OCI-LY7 (cell line): ENCODE measurements at regions of chr5 and their contacts with region 1.

Region 1: DNA sequence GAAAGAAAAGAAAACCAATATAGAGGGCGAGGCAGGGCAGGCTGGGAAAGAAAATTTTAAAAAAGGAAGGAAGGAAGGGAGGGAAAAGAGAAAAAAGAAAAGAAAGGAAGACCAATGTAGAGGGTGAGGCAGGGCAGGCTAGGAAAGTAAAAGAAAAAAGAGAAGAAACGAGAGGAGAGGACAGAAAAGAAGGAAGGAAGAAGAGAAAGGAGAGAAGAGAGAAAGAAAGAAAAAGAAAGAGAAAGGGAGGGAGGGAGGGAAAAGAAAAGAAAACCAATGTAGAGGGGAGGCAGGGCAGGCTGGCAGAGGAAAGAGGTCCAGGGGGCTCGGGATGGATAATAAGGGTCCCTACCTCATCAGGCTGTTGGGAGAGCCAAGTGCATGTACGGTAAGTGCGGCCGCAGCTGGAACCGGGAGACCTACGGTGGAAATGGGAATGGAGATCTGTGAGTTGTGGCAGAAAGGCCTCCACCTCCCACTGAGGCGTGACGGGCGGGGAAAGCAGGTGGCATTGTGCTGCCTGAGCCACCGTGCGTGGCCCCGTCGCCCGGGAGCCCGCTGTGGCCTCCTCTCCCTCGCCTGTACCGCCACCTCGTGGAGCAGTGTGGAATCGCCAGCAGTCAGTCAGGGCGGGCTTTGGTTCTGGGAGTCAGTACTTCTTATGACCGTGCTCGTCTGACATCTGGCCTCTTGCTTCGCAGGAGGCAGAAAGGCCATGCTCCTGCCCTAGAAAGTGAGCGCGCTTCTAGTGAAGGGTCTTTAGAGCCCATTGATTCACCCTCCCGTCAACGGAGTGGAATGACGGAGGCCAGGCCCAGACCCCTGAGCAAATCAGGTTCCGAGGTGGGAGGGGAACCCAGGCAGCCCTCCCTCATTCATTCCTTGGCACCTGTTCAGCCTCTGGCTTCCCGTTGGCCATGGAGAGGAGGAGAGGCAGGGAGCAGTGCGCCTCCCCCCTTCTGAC is 10.4 kb upstream of the NHP2 start:
- DNase-seq: peak; percentile 90
- H3K4me3 ChIP-seq: peak overlapping the region; percentile 38
- H3K27ac ChIP-seq: no peak overlapping the region
- H3K4me1 ChIP-seq: peaks cover 30% of the 10 kb centered on the region
- CTCF ChIP-seq: peak; percentile 98

Region 2: DNA sequence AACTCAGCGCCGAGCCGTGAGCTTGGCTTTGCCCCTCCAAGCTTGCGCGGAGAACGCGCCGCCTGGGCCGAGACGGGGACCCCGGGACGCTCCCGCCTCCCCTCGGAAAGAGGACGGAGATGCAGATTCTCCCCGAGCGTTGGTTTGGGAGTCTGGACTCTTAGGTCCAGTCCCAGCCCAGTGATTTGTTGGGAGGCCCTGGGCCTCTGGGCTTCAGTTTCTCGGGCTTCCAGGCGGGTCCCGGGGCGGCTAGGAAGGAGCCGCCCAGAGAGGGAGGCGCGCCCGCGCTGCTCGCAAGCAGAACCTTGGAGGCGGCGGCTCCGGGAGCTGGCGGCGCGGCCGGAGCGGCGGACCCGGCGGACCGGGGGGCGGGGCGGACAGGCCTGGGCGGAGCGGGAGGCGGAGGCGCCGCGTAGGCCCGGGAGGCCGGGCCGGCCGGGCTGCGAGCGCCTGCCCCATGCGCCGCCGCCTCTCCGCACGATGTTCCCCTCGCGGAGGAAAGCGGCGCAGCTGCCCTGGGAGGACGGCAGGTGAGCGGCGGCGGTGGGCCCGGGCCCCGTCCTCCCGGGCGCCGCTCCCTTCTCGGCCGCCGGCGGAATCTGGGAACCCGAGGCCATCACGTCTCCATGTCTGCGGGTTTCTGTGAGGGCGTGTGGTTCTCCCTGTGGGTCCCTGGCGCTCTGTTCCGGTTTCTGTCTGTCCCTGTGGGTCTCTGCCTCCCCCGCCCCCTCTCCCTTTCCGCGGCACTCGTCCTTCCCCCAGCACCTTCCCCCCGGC is 564.1 kb before region 1 on chr5 and contains the start of gene B4GALT7:
- CTCF ChIA-PET with region 1: no interaction called
- POLR2A ChIA-PET with region 1: no interaction called
- intact Hi-C with region 1: loop called (anchors 10 kb)
- DNase-seq: peak; percentile 88
- H3K4me3 ChIP-seq: peak within 1 kb of the TSS; percentile 74
- H3K27ac ChIP-seq: peak within 1 kb of the TSS; percentile 47
- H3K4me1 ChIP-seq: peaks cover 15% of the 10 kb centered on the region
- CTCF ChIP-seq: no peak
- total RNA-seq, gene B4GALT7: 19.8 and 24.9 TPM in 2 replicates

Region 3: DNA sequence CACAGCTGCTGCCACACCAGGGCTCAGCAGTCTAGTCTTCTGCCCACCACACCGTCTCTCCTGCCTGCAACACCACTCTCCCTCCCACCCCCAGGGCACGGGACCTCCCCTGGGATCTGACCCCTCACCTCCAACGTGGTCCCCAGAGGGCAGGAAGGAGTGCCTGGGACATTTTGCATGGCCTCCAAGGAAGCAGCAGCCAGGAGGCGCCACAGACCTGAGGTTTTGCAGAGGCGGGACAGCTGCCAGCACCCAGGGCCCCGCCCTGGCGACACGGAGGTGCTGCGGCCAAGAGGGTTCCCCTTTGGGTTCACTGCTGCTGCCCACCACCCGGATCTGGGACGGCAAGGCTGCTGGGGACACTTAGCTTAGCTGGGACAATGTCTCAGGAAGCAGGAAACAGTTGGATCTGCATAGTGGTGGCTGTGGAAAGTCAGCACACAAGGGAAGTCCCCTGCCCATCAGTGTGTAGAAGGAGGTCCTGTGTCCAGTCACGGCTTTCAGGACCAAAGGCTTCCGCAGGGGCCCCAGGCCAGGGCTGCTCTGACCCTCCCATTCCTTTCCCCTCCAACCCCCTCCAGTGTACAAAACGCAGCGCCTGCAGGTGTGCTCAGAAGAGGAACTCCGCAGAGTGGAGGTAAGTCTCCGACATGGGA is 181.9 kb before region 1 on chr5:
- CTCF ChIA-PET with region 1: no interaction called
- POLR2A ChIA-PET with region 1: no interaction called
- intact Hi-C with region 1: loop called (anchors 5 kb)
- DNase-seq: peak; percentile 65
- H3K4me3 ChIP-seq: no peak overlapping the region
- H3K27ac ChIP-seq: no peak overlapping the region
- H3K4me1 ChIP-seq: peaks cover 8% of the 10 kb centered on the region
- CTCF ChIP-seq: peak; percentile 77

Region 4: DNA sequence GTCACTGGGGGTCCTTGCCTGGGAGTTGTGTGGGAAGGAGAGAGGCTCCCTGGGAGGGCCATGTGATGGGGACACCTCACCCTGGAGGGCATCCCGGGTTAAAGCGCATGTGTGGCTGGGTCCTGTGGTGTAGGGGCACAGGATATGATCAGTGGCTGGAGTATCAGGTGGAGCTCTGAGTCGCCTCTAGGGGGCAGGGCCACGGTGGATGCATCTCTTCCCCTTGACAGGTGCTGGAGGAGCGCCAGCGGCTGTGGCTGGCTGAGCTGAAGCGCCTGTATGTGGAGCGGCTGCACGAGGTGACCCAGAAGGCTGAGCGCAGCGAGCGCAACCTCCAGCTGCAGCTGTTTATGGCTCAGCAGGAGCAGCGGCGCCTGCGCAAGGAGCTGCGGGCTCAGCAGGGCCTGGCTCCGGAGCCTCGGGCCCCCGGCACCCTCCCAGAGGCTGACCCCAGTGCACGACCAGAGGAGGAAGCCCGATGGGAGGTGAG is 43.1 kb before region 1 on chr5:
- CTCF ChIA-PET with region 1: no interaction called
- POLR2A ChIA-PET with region 1: no interaction called
- intact Hi-C with region 1: loop called (anchors 1 kb)
- DNase-seq: peak; percentile 98
- H3K4me3 ChIP-seq: peak overlapping the region; percentile 37
- H3K27ac ChIP-seq: peak overlapping the region; percentile 90
- H3K4me1 ChIP-seq: peaks cover 81% of the 10 kb centered on the region
- CTCF ChIP-seq: peak; percentile 87

Region 5: DNA sequence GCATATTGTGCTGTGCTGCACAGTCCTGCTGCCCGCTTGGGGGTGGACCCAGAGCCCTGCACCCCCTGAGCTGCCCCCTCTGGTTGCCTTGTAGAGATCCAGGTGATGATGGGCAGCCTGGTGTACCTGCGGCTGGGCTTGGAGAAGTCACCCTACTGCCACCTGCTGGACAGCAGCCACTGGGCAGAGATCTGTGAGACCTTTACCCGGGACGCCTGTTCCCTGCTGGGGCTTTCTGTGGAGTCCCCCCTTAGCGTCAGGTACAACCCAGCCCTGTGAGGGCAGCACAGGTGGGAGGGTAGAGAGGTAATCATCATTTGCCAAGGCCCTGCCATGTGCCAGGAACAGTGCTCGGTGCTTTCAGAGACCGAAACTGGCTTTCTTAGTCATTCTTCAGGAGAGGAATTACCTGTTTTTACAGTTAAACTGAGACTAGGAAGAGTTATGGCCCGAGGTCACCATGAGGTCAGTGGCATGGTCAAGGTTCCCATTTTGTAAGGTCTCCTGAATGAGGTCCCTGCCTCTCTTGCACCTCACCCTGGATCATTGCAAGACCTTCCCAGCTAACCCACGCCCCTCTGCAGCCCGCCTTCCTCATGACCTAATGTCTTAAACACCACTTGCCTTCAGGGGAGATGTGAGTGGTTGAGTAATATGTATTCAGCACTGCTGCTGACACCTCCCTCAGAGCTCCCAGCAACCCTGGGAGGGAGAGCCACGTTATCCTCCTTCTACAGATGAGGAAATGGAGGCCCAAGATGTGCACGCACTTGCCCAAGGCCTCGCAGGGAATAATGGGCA is 17.8 kb before region 1 on chr5:
- CTCF ChIA-PET with region 1: no interaction called
- POLR2A ChIA-PET with region 1: no interaction called
- intact Hi-C with region 1: loop called (anchors 1 kb)
- DNase-seq: peak; percentile 81
- H3K4me3 ChIP-seq: no peak overlapping the region
- H3K27ac ChIP-seq: no peak overlapping the region
- H3K4me1 ChIP-seq: peaks cover 4% of the 10 kb centered on the region
- CTCF ChIP-seq: peak; percentile 90